ENCODE measurements at regions of chr13 and their contacts with region 1.

Region 1: DNA sequence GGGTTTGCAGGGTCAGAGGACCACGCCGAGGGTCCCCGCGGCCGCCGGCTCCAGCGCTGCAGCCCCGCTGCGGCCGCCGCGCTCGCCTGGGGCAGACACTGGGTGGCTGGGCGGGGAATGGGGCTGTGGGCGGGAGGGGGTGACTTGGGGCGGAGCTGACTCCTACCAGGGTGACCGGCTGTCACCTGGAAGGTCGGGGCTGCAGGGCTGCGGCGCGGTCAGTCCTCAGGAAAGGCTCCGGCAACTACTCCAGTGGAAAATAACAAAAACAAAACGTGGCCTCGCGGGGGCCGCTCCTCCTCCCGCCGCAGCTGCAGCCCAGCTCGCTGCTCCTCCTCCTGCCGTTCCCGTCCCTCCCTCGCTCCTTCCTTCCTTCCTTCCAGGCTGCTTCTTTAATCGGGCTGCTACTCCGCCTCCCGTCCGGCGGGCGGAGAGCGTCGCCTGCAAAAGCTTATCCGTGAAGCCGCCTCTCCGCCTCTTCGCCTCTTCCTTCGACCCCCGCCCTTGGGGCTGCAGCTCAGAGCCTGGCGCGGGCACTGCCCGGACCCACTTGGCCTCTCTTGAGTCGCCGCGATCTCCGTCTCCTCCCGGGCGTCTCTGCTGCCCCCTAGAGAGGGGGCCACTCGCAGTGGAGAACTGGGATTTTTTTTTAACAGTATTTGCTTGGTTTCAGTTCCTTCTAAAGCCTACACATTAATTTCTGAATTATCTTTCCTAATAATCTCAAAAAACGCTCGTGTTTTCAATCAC is at the start of gene TBC1D4:
- DNase-seq: peak; percentile 97
- H3K4me3 ChIP-seq: peak within 1 kb of the TSS; percentile 74 to 90 (median 86)
- H3K27ac ChIP-seq: peak within 1 kb of the TSS; percentile 63
- H3K4me1 ChIP-seq: peaks cover 9% of the 10 kb centered on the region
- H3K27me3 ChIP-seq: peaks cover 0 to 2% of the 10 kb centered on the region in 2 experiments
- CTCF ChIP-seq: peak; percentile 88 to 95
- POLR2A ChIP-seq: peak; percentile 66
- total RNA-seq, gene TBC1D4: 72.4 and 81.0 TPM in 2 replicates

Region 2: GRCh38 chr13:74575729-74576125 is 906.5 kb before region 1 on chr13:
- CTCF ChIA-PET with region 1: no interaction called
- POLR2A ChIA-PET with region 1: no interaction called
- dilution Hi-C with region 1: no loop called
- intact Hi-C with region 1: no loop called
- DNase-seq: peak; percentile 62
- H3K4me3 ChIP-seq: peak overlapping the region; percentile 14 to 21 (median 19)
- H3K27ac ChIP-seq: no peak overlapping the region
- H3K4me1 ChIP-seq: peaks cover 6% of the 10 kb centered on the region
- H3K27me3 ChIP-seq: peaks cover 0 to 2% of the 10 kb centered on the region in 2 experiments
- CTCF ChIP-seq: no peak
- POLR2A ChIP-seq: no peak

Region 3: DNA sequence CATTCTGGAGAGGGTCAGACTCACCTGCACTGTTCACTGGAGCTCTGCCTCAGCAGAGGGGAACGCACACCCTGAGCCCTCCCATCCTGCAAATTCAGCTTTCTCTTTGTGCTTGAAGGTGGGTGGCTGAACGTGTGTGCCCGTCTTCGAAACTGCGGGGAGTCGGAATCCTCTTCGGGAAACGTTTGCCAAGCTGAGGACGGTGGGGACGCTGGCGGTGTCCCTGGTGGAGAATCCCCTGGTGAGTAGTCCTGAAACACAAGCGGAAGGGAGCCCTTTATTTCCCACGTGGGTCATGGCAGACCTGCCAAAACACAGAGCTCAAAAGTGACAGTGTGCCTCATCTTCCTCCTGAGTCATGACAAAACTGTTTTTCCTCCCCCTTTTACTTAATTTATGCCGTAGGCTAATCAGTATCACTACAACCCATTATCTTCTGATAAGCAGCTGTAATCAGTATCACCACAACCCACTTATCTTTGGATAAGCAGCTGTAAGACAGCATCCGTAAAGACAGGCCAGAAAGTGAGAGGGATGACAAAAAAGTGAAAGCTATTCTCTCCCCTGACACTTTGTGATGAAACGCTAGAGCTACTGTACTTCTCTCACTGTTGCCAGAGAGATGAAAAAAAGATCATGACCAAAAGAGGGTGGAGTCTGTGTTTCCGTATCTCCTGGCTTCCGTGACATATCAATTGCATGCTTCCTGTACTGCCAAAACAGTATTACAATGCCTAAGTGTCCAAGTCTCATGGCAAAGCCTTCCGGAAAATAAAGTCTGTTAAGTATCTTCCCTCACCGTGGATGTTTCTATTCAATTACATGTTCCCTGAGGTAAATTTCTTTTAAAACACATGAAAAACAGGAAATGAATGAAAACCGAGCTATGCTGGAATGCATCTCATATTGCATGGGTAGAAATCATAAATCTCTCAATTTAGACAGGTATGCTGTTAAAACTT is 155.8 kb before region 1 on chr13:
- CTCF ChIA-PET with region 1: interaction called, 17 read pairs
- POLR2A ChIA-PET with region 1: no interaction called
- dilution Hi-C with region 1: no loop called
- intact Hi-C with region 1: loop called (anchors 1 kb)
- DNase-seq: peak; percentile 87
- H3K4me3 ChIP-seq: peak overlapping the region in 2 of 3 experiments; percentile 24 to 44
- H3K27ac ChIP-seq: peak overlapping the region; percentile 82
- H3K4me1 ChIP-seq: peaks cover 53% of the 10 kb centered on the region
- H3K27me3 ChIP-seq: no peaks in the 10 kb centered on the region
- CTCF ChIP-seq: no peak
- POLR2A ChIP-seq: no peak

Region 4: GRCh38 chr13:75357576-75358289 is 124.5 kb before region 1 on chr13:
- CTCF ChIA-PET with region 1: interaction called, 10 read pairs
- POLR2A ChIA-PET with region 1: no interaction called
- dilution Hi-C with region 1: no loop called
- intact Hi-C with region 1: no loop called
- DNase-seq: peak; percentile 78
- H3K4me3 ChIP-seq: no peak overlapping the region
- H3K27ac ChIP-seq: no peak overlapping the region
- H3K4me1 ChIP-seq: peaks cover 2% of the 10 kb centered on the region
- H3K27me3 ChIP-seq: no peaks in the 10 kb centered on the region
- CTCF ChIP-seq: peak; percentile 72 to 78
- POLR2A ChIP-seq: no peak

Region 5: DNA sequence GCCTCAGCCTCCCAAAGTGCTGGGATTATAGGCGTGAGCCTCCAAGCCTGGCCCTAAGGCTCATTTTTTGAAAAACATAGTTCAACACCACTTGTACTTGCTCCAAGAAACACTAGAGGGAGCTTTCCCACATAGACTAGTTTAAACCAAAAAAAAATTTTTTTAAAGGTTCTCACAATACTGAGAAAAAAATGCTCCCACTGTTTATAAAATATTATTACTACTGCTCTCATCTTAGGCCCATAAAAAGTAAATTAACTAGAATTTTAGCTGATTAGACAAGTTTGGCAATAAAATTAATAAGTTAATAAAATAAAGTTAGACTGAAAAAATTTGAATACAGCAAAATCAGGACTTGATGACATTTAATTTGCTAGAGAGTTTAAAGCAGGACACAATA is 109.7 kb before region 1 on chr13:
- CTCF ChIA-PET with region 1: interaction called, 66 read pairs
- POLR2A ChIA-PET with region 1: no interaction called
- dilution Hi-C with region 1: no loop called
- intact Hi-C with region 1: loop called (anchors 1 kb)
- DNase-seq: peak; percentile 55
- H3K4me3 ChIP-seq: no peak overlapping the region
- H3K27ac ChIP-seq: no peak overlapping the region
- H3K4me1 ChIP-seq: peaks cover 18% of the 10 kb centered on the region
- H3K27me3 ChIP-seq: no peaks in the 10 kb centered on the region
- CTCF ChIP-seq: peak; percentile 36 to 49
- POLR2A ChIP-seq: no peak

Region 6: DNA sequence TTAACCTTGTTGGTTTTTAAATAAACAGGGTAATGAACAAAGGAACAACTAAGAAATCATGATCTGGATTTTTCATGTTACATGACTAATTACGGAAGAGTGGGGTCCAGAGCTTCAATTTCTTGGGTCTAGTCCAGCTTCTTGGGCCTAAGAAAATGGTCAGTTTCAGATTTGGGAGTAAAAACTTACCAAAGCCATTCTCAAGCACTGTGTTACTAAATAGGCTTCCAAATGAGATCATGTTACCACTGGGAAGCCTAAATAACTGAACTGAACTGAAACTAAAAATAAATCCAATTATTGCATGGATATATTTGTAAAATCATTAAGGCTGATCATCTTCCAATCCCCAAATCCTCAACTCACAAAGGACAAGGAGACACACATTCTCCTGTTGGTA is 14.1 kb before region 1 on chr13:
- CTCF ChIA-PET with region 1: interaction called, 13 read pairs
- POLR2A ChIA-PET with region 1: no interaction called
- dilution Hi-C with region 1: no loop called
- intact Hi-C with region 1: no loop called
- DNase-seq: no peak
- H3K4me3 ChIP-seq: no peak overlapping the region
- H3K27ac ChIP-seq: no peak overlapping the region
- H3K4me1 ChIP-seq: no peaks in the 10 kb centered on the region
- H3K27me3 ChIP-seq: no peaks in the 10 kb centered on the region
- CTCF ChIP-seq: no peak
- POLR2A ChIP-seq: no peak

Region 7: GRCh38 chr13:75537401-75538365 is 55.4 kb after region 1 on chr13 and contains the start of gene COMMD6:
- CTCF ChIA-PET with region 1: interaction called, 15 read pairs
- POLR2A ChIA-PET with region 1: no interaction called
- dilution Hi-C with region 1: no loop called
- intact Hi-C with region 1: loop called (anchors 1 kb)
- DNase-seq: peak; percentile 83
- H3K4me3 ChIP-seq: peak within 1 kb of the TSS; percentile 56 to 81 (median 64)
- H3K27ac ChIP-seq: peak within 1 kb of the TSS; percentile 79
- H3K4me1 ChIP-seq: peaks cover 8% of the 10 kb centered on the region
- H3K27me3 ChIP-seq: no peaks in the 10 kb centered on the region
- CTCF ChIP-seq: no peak
- POLR2A ChIP-seq: peak; percentile 97
- total RNA-seq, gene COMMD6: 112 and 122 TPM in 2 replicates

Region 8: DNA sequence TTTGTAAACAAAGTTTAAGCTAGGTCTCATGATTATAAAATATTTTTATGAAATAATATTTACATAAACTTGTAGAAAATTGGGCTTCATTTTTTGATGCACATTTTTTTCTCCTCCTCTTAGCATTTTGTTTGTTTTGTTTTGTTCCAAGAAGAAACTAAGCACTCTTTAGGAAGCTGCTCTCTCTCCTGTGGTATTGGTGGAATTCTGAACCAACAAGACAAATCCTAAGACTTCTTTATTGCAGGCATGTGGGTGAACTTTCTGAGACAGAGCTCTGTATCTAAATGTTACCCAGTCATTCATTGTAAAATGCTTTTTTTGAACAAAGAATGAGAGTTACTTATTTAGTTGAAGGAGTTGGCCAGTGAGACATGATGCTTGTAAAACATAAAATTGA is 193.2 kb after region 1 on chr13:
- CTCF ChIA-PET with region 1: no interaction called
- POLR2A ChIA-PET with region 1: no interaction called
- dilution Hi-C with region 1: no loop called
- intact Hi-C with region 1: loop called (anchors 10 kb)
- DNase-seq: no peak
- H3K4me3 ChIP-seq: no peak overlapping the region
- H3K27ac ChIP-seq: no peak overlapping the region
- H3K4me1 ChIP-seq: peaks cover 1% of the 10 kb centered on the region
- H3K27me3 ChIP-seq: no peaks in the 10 kb centered on the region
- CTCF ChIP-seq: no peak
- POLR2A ChIP-seq: no peak

Region 9: GRCh38 chr13:75836441-75836840 is 354.2 kb after region 1 on chr13:
- CTCF ChIA-PET with region 1: no interaction called
- POLR2A ChIA-PET with region 1: no interaction called
- dilution Hi-C with region 1: no loop called
- intact Hi-C with region 1: no loop called
- DNase-seq: no peak
- H3K4me3 ChIP-seq: no peak overlapping the region
- H3K27ac ChIP-seq: no peak overlapping the region
- H3K4me1 ChIP-seq: no peaks in the 10 kb centered on the region
- H3K27me3 ChIP-seq: no peaks in the 10 kb centered on the region
- CTCF ChIP-seq: no peak
- POLR2A ChIP-seq: no peak